Endothelial cell of umbilical vein (primary cell): ENCODE measurements at regions of chr1 and their contacts with region 1.

Region 1: DNA sequence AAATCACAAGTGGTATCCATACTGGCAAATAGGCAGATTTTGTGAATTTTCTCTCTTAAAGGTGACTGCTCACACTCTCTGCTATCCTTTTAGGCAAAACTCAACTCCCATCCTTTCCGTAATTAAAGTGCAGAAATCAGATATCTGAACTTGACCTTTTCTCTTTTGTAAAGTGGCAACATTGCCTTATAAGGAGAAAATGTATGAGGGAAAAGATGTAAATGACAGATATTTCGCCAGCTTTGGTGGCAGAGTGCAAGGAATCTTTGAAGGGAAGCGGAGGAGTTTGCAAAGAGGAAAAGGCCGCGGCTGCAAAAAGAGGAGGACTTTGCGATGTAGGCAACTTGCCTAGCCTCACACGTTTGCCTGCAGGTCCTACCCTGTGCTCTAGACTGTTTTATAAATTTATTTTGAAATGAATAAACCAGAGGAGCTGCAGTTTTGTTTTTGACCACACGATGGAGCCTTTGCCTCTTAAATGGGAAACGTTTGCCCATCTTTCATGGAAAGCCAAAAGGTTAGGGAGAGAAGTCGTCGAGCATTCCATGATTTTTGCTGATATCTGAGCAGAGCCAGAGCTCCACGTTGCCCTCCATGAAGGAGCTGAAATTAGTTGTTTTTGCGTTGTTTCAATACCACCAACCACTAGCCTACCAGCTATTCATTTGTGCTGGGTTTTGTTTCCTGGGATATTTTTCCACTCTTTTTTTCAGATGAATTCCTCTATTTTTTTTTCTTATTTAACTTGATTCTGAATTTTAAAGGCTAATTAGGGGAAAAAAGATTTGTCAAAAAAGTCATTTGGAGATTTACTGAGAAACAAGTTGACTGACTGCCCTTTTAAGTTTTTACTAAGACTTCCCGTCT is 242.3 kb downstream of the LMX1A start:
- DNase-seq: peak; percentile 48
- H3K4me3 ChIP-seq: no peak overlapping the region
- H3K27ac ChIP-seq: no peak overlapping the region
- H3K4me1 ChIP-seq: no peaks in the 10 kb centered on the region
- H3K27me3 ChIP-seq: peaks cover 1 to 10% of the 10 kb centered on the region in 2 experiments
- CTCF ChIP-seq: peak; percentile 56 to 68
- POLR2A ChIP-seq: no peak

Region 2: DNA sequence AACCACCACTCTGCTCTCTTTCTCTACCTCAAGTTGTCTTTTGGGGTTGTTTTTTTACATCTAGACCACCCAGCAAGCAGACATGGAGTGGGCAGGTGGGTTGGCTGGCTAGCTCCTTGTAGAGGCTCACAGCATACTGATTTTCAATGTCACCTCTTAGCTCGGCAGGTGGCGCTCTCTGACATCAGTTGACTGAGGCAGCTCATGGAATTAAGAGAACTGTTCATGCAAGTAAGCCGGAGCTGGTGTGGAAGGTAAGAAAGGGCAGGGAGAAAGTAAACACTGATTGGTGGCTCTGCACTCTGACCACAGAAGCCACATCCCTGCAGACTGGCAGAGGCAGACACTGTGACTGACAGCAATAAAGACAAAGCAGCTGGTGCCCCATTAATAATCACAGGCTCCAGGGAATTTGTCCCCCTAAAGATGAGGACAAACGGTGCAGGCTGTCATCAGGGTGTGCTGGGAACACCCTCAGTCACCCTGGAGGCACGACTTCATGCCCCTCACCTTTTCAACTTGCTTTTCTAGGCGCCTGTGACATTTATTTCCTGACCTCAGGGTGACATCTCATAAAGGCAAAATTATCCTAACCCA is 15.4 kb after region 1 on chr1:
- CTCF ChIA-PET with region 1: interaction called, 22 read pairs
- POLR2A ChIA-PET with region 1: no interaction called
- dilution Hi-C with region 1: no loop called
- intact Hi-C with region 1: no loop called
- DNase-seq: peak; percentile 40
- H3K4me3 ChIP-seq: no peak overlapping the region
- H3K27ac ChIP-seq: no peak overlapping the region
- H3K4me1 ChIP-seq: no peaks in the 10 kb centered on the region
- H3K27me3 ChIP-seq: no peaks in the 10 kb centered on the region
- CTCF ChIP-seq: peak; percentile 39 to 48
- POLR2A ChIP-seq: no peak